Heart right ventricle (tissue), 16 donors: ENCODE measurements at regions of chr1 and their contacts with region 1.

Region 1: GRCh38 chr1:53878492-53879105 is 11.0 kb downstream of the YIPF1 start:
- DNase-seq: no peak
- ATAC-seq: no peak
- H3K4me3 ChIP-seq: no peak overlapping the region
- H3K27ac ChIP-seq: no peak overlapping the region
- H3K4me1 ChIP-seq: no peaks in the 10 kb centered on the region
- H3K27me3 ChIP-seq: no peaks in the 10 kb centered on the region
- CTCF ChIP-seq: peak; percentile 20 to 71 (median 61)

Region 2: DNA sequence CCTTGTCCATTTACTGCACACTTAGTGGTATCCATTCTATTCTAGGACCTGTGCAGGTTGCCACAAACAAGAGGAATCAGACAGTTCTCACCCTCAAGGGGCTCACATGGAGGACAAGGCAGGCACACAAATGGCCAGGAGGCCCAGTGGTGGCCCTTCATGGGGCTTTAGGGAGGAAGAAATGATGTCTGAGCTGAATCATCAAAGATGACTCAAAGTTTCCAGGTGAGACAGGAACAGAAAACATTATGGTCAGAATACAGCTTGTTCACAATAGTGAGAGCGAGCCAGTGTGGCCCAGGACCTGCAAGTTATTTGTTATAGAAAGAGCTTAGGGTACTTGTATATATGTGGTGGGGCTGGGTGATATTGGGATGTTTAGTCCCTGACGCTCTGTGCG is 1219.2 kb before region 1 on chr1:
- intact Hi-C with region 1: no loop called
- DNase-seq: no peak
- ATAC-seq: no peak
- H3K4me3 ChIP-seq: no peak overlapping the region
- H3K27ac ChIP-seq: no peak overlapping the region
- H3K4me1 ChIP-seq: no peaks in the 10 kb centered on the region
- H3K27me3 ChIP-seq: no peaks in the 10 kb centered on the region
- CTCF ChIP-seq: no peak

Region 3: DNA sequence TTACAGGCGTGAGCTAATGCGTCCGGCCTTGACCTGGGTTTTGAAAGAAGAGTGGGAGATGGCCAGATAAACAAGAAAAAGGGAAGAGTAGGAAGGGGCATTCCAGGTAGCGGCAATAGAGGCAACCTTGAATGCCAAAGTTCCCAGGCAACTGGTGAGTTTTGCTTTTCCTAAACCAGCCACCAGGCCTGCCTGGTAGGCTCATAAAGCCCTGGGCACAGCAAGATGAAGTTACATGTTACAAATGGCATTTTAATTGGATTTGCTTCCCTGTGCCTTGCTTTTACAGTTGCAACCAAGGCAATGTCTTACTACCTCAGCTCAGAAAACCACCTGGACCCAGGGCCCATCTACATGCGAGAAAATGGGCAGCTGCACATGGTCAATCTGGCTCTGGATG is 73.1 kb after region 1 on chr1:
- intact Hi-C with region 1: loop called in 3 of 10 experiments (anchors 5 kb)
- DNase-seq: no peak
- ATAC-seq: no peak
- H3K4me3 ChIP-seq: no peak overlapping the region
- H3K27ac ChIP-seq: no peak overlapping the region
- H3K4me1 ChIP-seq: peaks cover 0 to 48% (median 25%) of the 10 kb centered on the region in 9 donors
- H3K27me3 ChIP-seq: no peaks in the 10 kb centered on the region
- CTCF ChIP-seq: no peak

Region 4: DNA sequence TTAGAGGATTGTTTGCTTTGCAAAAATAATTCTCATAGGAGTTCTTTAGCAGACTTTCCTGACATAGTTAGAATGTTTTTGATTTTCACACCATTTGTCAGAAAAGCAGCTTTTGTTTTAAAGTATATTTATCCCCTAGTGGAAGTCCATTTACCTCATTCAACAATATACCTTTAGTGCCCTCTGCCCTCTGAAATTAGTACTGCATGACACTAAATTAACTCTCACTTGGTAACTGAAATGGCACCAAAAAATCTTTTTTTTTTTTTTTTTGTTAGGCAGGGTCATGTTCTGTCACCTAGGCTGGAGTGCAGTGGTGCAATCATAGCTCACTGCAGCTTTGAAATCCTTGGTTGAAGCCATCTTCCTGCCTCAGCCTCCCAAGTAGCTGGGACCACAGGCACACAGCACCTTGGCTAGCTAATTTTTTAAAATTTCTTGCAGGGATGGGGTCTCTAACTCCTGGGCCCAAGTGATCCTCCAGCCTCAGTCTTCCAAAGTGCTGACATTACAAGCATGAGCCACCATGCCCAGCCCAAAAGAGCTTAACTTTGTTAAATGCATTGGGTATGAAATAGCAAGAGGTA is 81.2 kb after region 1 on chr1:
- intact Hi-C with region 1: loop called in 2 of 10 experiments (anchors 5 kb)
- DNase-seq: no peak
- ATAC-seq: no peak
- H3K4me3 ChIP-seq: no peak overlapping the region
- H3K27ac ChIP-seq: no peak overlapping the region
- H3K4me1 ChIP-seq: peaks cover 0 to 18% (median 10%) of the 10 kb centered on the region in 9 donors
- H3K27me3 ChIP-seq: no peaks in the 10 kb centered on the region
- CTCF ChIP-seq: peak; percentile 6 to 66 (median 56)

Region 5: GRCh38 chr1:54016313-54017262 is 138.0 kb after region 1 on chr1:
- intact Hi-C with region 1: no loop called
- DNase-seq: no peak
- ATAC-seq: no peak
- H3K4me3 ChIP-seq: no peak overlapping the region
- H3K27ac ChIP-seq: no peak overlapping the region
- H3K4me1 ChIP-seq: no peaks in the 10 kb centered on the region
- H3K27me3 ChIP-seq: peaks cover 0 to 40% (median 19%) of the 10 kb centered on the region in 7 donors
- CTCF ChIP-seq: no peak

Region 6: DNA sequence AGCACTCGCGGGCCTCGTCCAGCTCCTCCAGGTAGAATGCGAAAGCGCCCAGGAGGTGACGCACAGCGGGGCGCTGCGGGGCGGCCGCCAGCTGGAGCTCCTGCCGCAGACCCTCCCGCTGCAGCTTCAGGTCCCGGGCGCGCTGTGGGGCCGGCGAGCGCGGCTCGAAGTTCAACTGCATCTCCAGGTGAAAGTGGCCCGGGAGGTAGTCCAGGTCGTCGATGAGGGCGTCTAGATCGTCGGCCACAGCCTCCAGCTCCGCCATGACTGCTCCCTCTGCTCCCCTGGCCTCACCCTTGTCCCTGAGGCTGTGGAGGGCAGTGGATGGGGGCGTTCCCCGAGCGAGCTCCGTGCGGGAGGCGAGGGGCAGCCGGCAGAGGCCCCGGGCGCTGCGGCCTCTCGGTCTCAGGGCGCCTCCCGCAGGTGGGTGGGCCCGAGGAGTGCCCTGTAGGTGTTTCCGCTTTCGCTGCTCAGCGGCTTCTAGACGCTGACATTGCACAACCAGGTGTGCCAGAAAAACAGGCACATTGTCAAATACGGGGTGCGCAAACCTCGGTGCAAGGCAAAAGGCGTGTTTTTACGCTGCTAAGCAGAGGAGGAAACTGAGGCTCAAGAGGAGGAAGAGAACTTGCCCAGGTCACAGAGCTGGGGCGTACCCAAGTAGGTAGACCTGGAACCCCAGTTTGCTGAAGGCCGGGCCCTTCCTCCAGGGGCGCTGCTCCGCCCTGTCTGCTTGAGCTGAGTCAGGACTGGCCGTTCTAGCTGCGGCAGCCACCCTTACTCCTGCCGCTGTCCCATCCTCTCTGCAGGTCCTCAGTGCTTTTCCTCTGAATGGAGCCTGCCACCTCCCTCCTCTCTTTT is 922.5 kb after region 1 on chr1 and contains the start of gene TTC22:
- intact Hi-C with region 1: loop called in 1 of 10 experiments (anchors 10 kb)
- DNase-seq: no peak
- ATAC-seq: peak in 6 of 8 donors; percentile 58 to 76 (median 66)
- H3K4me3 ChIP-seq: peak within 1 kb of the TSS in 9 of 10 donors; percentile 1 to 62 (median 35)
- H3K27ac ChIP-seq: peak within 1 kb of the TSS in 1 of 10 donors; percentile 74
- H3K4me1 ChIP-seq: peaks cover 0 to 39% (median 9%) of the 10 kb centered on the region in 9 donors
- H3K27me3 ChIP-seq: peaks cover 0 to 59% (median 34%) of the 10 kb centered on the region in 7 donors
- CTCF ChIP-seq: peak in 4 of 9 donors; percentile 28 to 37 (median 34)
- total RNA-seq, gene TTC22: 0.13 to 1.0 (median 0.17) TPM in 5 of 10 donors, not detected in the others